ENCODE measurements at regions of chr12 and their contacts with region 1.

Region 1: GRCh38 chr12:106766393-106766826 is 8.1 kb upstream of the RIC8B start:
- DNase-seq: peak; percentile 33
- H3K4me3 Mint-ChIP-seq: no peak overlapping the region
- H3K27ac Mint-ChIP-seq: no peak overlapping the region
- H3K4me1 Mint-ChIP-seq: peaks cover 44% of the 10 kb centered on the region
- H3K27me3 Mint-ChIP-seq: no peaks in the 10 kb centered on the region
- CTCF ChIP-seq: no peak

Region 2: DNA sequence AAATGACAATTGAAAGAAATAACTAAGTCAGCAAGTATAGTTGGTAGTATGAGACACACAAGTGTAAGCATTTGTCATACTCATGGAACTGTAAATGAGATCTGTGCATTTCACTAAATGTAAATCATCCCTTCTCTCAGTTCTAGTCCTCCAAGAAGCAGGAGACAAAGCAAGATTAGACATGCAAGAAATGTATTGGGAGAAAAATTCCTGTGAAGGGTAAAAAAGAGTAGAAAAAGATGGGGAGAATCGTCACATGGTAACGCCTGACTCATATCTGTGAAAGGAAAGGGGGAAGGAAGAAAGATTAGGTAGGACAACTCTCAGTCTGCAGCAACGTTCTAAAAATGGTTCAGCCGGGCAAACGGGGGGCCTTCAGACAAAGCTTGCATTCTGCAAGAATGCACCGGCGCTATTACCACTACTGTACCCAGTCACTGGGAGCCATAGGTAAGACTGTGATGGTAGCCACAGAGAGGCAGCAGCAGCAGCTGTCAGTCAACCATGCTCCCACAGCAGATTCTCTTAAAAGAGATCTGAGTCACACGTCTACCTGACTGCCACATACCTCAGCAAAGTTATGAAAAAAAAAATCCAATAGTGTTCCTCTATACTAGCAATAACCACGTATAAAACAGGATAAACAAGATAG is 201.6 kb before region 1 on chr12:
- CTCF ChIA-PET with region 1: no interaction called
- intact Hi-C with region 1: no loop called
- DNase-seq: no peak
- H3K4me3 Mint-ChIP-seq: no peak overlapping the region
- H3K27ac Mint-ChIP-seq: no peak overlapping the region
- H3K4me1 Mint-ChIP-seq: no peaks in the 10 kb centered on the region
- H3K27me3 Mint-ChIP-seq: no peaks in the 10 kb centered on the region
- CTCF ChIP-seq: no peak

Region 3: GRCh38 chr12:106581543-106582248 is 184.7 kb before region 1 on chr12:
- CTCF ChIA-PET with region 1: no interaction called
- intact Hi-C with region 1: loop called (anchors 5 kb)
- DNase-seq: peak; percentile 43
- H3K4me3 Mint-ChIP-seq: peak overlapping the region; percentile 31
- H3K27ac Mint-ChIP-seq: no peak overlapping the region
- H3K4me1 Mint-ChIP-seq: peaks cover 26% of the 10 kb centered on the region
- H3K27me3 Mint-ChIP-seq: peaks cover 83% of the 10 kb centered on the region
- CTCF ChIP-seq: no peak

Region 4: GRCh38 chr12:106736051-106736957 is 30.1 kb before region 1 on chr12:
- CTCF ChIA-PET with region 1: interaction called, 10 read pairs
- intact Hi-C with region 1: no loop called
- DNase-seq: no peak
- H3K4me3 Mint-ChIP-seq: no peak overlapping the region
- H3K27ac Mint-ChIP-seq: no peak overlapping the region
- H3K4me1 Mint-ChIP-seq: peaks cover 18% of the 10 kb centered on the region
- H3K27me3 Mint-ChIP-seq: no peaks in the 10 kb centered on the region
- CTCF ChIP-seq: no peak

Region 5: DNA sequence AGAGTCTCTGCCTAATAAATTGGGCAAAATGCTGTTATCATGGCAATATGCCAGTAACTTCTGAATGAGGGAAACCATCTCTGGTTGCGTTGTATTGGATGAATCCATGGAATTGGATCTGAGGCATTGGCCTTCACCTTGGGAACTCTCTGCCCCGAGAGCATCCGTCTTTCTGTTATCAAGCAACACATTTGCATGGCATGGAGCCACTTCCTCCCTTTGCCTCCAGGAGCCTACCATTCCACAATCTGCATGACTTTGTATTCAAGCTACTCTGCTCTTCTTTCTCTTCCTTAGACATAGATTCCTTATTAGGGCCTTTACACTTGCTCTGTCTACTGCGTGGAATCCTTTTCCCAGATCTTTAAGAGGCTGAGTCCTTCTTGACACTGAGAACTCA is 65.3 kb after region 1 on chr12:
- CTCF ChIA-PET with region 1: no interaction called
- intact Hi-C with region 1: no loop called
- DNase-seq: no peak
- H3K4me3 Mint-ChIP-seq: no peak overlapping the region
- H3K27ac Mint-ChIP-seq: no peak overlapping the region
- H3K4me1 Mint-ChIP-seq: peaks cover 16% of the 10 kb centered on the region
- H3K27me3 Mint-ChIP-seq: no peaks in the 10 kb centered on the region
- CTCF ChIP-seq: no peak

Measured in Calu3 (cell line).